HepG2 (cell line): ENCODE measurements at regions of chr16 and their contacts with region 1.

Region 1: DNA sequence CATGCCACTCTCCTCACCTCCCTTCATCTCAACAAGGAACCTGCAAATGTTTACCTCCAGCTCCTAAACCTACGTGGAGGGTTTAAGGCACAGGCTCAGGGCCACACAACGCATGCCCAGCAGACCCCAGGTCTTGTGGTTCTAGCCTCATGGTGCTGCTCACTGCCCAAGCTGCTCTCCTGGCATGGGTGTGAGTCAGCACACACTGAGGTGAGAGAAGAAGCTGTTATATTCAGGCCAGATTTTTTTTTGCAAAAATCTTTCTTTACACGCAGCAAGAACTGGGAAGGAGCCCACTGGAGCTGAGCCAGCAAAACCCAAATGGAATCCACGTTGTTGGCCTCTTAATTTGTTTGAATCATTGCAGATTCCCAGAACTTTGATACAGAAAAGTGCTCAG is 5.5 kb upstream of the C16orf96 start:
- DNase-seq: no peak
- ATAC-seq: no peak
- H3K4me3 ChIP-seq: no peak overlapping the region
- H3K27ac ChIP-seq: no peak overlapping the region
- H3K4me1 ChIP-seq: peaks cover 10% of the 10 kb centered on the region
- H3K27me3 ChIP-seq: 0 out of 5 replicates have a peak, but pooled peaks cover 2 to 4% of the 10 kb centered on the region in 2 experiments
- CTCF ChIP-seq: no peak
- EP300 ChIP-seq: no peak
- POLR2A ChIP-seq: no peak
- RAD21 ChIP-seq: no peak

Region 2: DNA sequence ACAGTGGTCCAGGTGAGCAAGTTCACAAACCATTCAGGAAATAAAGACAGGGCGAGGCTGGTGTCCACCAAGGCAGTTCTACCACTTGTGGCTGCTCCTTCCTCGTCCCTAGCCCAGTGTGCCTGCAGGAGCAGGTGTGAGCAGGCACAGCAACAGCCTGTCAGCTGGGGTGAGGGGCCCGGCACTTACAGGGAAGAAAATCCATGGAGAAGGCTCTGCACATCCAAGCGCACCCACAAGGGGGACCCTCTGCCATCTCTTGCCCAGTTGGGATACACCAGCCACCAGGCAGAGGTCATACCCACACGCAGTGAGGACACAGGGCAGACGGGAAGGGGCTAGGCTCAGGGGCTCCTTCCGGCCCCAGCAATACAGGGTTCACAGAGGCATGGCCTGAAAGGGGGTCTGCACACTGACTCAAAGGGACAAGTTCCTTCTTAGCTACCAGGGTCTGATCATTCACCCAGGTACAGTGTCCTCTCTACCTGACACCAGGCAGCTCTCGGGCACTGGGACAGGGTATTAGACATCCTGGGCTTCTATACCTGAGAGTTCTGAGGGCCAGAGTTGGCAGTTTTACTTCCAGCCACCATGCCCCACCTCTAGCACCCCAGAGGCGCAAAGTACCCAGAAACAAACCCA is 39.0 kb before region 1 on chr16:
- CTCF ChIA-PET with region 1: interaction called, 10 read pairs
- POLR2A ChIA-PET with region 1: interaction called, 3 read pairs
- in situ Hi-C with region 1: loop called (anchors 5 kb)
- intact Hi-C with region 1: loop called (anchors 2 kb)
- DNase-seq: peak; percentile 60
- ATAC-seq: peak; percentile 81
- H3K4me3 ChIP-seq: no peak overlapping the region
- H3K27ac ChIP-seq: no peak overlapping the region
- H3K4me1 ChIP-seq: peaks cover 15% of the 10 kb centered on the region; the same call in 1 of the 2 replicates
- H3K27me3 ChIP-seq: no peaks in the 10 kb centered on the region
- CTCF ChIP-seq: peak; percentile 76
- EP300 ChIP-seq: no peak
- POLR2A ChIP-seq: 0 out of 4 replicates have a peak, but pooled peaks of 1 of the 2 experiments have one; percentile 18
- RAD21 ChIP-seq: peak; percentile 66

Region 3: GRCh38 chr16:4538350-4539235 is 12.0 kb before region 1 on chr16 and contains the start of gene CDIP1:
- CTCF ChIA-PET with region 1: no interaction called
- POLR2A ChIA-PET with region 1: interaction called, 17 read pairs
- in situ Hi-C with region 1: no loop called
- intact Hi-C with region 1: no loop called
- DNase-seq: peak; percentile 91
- ATAC-seq: peak; percentile 86
- H3K4me3 ChIP-seq: peak within 1 kb of the TSS; percentile 77 to 90 (median 88)
- H3K27ac ChIP-seq: peak within 1 kb of the TSS; percentile 93
- H3K4me1 ChIP-seq: peaks cover 37% of the 10 kb centered on the region
- H3K27me3 ChIP-seq: no peaks in the 10 kb centered on the region
- CTCF ChIP-seq: peak; percentile 39
- EP300 ChIP-seq: peak; percentile 6 to 39; a peak in 1 of 4 replicates
- POLR2A ChIP-seq: peak; percentile 97 to 98
- RAD21 ChIP-seq: peak; percentile 58; the same call in 1 of the 2 replicates
- total RNA-seq, gene CDIP1: 56.7 and 62.2 TPM in 2 replicates

Region 4: DNA sequence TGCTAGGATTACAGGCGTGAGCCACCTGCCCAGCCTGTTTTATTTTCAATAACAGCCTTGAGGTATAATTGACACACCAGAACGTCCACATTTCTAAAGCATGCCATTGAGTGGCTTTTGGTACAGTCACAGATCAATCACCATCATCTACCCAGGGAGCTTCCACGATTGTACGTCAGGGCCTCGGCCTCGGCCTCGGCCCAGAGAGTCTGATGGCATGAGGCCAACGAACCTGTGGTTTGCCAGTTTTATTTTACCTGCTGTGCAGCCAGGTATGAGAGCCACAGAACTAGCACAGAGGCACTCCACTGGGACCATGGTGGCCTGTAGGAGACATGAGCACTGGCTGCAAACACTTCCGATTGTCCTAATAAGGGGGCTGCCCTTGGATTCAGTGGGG is 55.8 kb after region 1 on chr16:
- CTCF ChIA-PET with region 1: no interaction called
- POLR2A ChIA-PET with region 1: no interaction called
- in situ Hi-C with region 1: no loop called
- intact Hi-C with region 1: no loop called
- DNase-seq: no peak
- ATAC-seq: no peak
- H3K4me3 ChIP-seq: no peak overlapping the region
- H3K27ac ChIP-seq: no peak overlapping the region
- H3K4me1 ChIP-seq: peaks cover 37% of the 10 kb centered on the region
- H3K27me3 ChIP-seq: peaks cover 0 to 20% of the 10 kb centered on the region in 2 experiments; a peak in 3 of 5 replicates
- CTCF ChIP-seq: no peak
- EP300 ChIP-seq: no peak
- POLR2A ChIP-seq: 0 out of 4 replicates have a peak, but pooled peaks of 1 of the 2 experiments have one; percentile 3
- RAD21 ChIP-seq: no peak